Activated naive CD8-positive, alpha-beta T cell treated with anti-CD3 and anti-CD28 coated beads, Interleukin-2, amount 10 ng/mL, durations not matched to agents 7 days and 5 days (primary cell): ENCODE measurements at regions of chr20 and their contacts with region 1.

Region 1: GRCh38 chr20:36645998-36646397 is at the start of gene SLA2:
- DNase-seq: peak; percentile 72
- ATAC-seq: peak; percentile 77
- H3K4me3 Mint-ChIP-seq: peak within 1 kb of the TSS; percentile 98
- H3K27ac Mint-ChIP-seq: peak within 1 kb of the TSS; percentile 98
- H3K4me1 Mint-ChIP-seq: peaks cover 42% of the 10 kb centered on the region
- H3K27me3 Mint-ChIP-seq: no peaks in the 10 kb centered on the region
- total RNA-seq, gene SLA2: 103 TPM

Region 2: GRCh38 chr20:35421322-35421721 is 1224.7 kb before region 1 on chr20:
- POLR2A ChIA-PET with region 1: no interaction called
- DNase-seq: no peak
- ATAC-seq: no peak
- H3K4me3 Mint-ChIP-seq: no peak overlapping the region
- H3K27ac Mint-ChIP-seq: no peak overlapping the region
- H3K4me1 Mint-ChIP-seq: peaks cover 2% of the 10 kb centered on the region
- H3K27me3 Mint-ChIP-seq: peaks cover 20% of the 10 kb centered on the region

Region 3: GRCh38 chr20:36605399-36606157 is 40.4 kb before region 1 on chr20 and contains the start of gene RAB5IF:
- POLR2A ChIA-PET with region 1: interaction called, 25 read pairs
- DNase-seq: peak; percentile 99
- ATAC-seq: peak; percentile 93
- H3K4me3 Mint-ChIP-seq: peak within 1 kb of the TSS; percentile 98
- H3K27ac Mint-ChIP-seq: peak within 1 kb of the TSS; percentile 98
- H3K4me1 Mint-ChIP-seq: peaks cover 24% of the 10 kb centered on the region
- H3K27me3 Mint-ChIP-seq: no peaks in the 10 kb centered on the region
- total RNA-seq, gene RAB5IF: 73.1 to 76.1 TPM

Region 4: GRCh38 chr20:36624068-36624943 is 21.7 kb before region 1 on chr20:
- POLR2A ChIA-PET with region 1: interaction called, 90 read pairs
- DNase-seq: no peak
- ATAC-seq: peak; percentile 22
- H3K4me3 Mint-ChIP-seq: no peak overlapping the region
- H3K27ac Mint-ChIP-seq: peak overlapping the region; percentile 81
- H3K4me1 Mint-ChIP-seq: peaks cover 38% of the 10 kb centered on the region
- H3K27me3 Mint-ChIP-seq: no peaks in the 10 kb centered on the region

Region 5: GRCh38 chr20:36629719-36630681 is 16.0 kb before region 1 on chr20:
- POLR2A ChIA-PET with region 1: interaction called, 90 read pairs
- DNase-seq: peak; percentile 71
- ATAC-seq: peak; percentile 95
- H3K4me3 Mint-ChIP-seq: peak overlapping the region; percentile 78
- H3K27ac Mint-ChIP-seq: peak overlapping the region; percentile 93
- H3K4me1 Mint-ChIP-seq: peaks cover 49% of the 10 kb centered on the region
- H3K27me3 Mint-ChIP-seq: no peaks in the 10 kb centered on the region

Region 6: GRCh38 chr20:36658300-36658699 is 12.3 kb after region 1 on chr20:
- POLR2A ChIA-PET with region 1: interaction called, 109 read pairs
- DNase-seq: no peak
- ATAC-seq: peak; percentile 83
- H3K4me3 Mint-ChIP-seq: peak overlapping the region; percentile 78
- H3K27ac Mint-ChIP-seq: peak overlapping the region; percentile 91
- H3K4me1 Mint-ChIP-seq: peaks cover 28% of the 10 kb centered on the region
- H3K27me3 Mint-ChIP-seq: no peaks in the 10 kb centered on the region

Region 7: DNA sequence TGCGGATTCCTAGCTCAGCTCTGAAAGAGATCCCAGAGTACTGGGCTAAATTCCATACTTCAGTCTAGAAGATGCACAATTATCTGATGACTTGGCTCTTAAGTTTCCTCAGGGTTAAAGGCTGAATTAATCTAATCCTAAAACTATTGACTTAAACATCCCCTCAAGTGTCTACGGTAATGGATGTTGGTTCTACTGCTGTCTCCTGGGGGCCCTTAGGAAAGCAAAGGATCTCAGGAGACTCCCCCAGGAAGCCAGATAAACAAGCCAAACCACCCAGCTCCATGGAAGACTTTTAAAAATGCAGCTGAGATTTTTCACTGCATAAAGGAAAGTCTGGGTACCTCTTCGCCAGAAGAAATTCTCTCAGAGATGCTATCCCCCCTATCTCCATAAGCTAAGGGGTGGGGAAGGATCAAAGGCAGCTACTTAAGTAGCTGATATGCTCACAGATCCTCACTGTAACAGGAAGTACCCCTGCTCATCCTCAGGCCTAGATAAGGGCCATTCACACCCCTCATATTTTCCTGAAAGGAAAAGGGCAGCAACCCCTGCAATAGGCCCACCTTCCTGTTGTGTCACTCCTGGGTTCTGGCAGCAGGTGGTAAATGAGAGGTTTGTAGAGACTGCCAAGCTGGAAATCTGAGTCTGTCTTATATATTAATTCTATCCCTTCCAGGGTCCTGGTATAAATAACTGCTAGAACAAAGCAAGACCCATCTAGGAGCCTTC is 90.6 kb after region 1 on chr20:
- POLR2A ChIA-PET with region 1: interaction called, 39 read pairs
- DNase-seq: no peak
- ATAC-seq: no peak
- H3K4me3 Mint-ChIP-seq: no peak overlapping the region
- H3K27ac Mint-ChIP-seq: peak overlapping the region; percentile 43
- H3K4me1 Mint-ChIP-seq: peaks cover 31% of the 10 kb centered on the region
- H3K27me3 Mint-ChIP-seq: no peaks in the 10 kb centered on the region

Region 8: GRCh38 chr20:36773597-36774390 is 127.8 kb after region 1 on chr20 and contains the start of gene DSN1:
- POLR2A ChIA-PET with region 1: interaction called, 10 read pairs
- DNase-seq: peak; percentile 100
- ATAC-seq: peak; percentile 93
- H3K4me3 Mint-ChIP-seq: peak within 1 kb of the TSS; percentile 92
- H3K27ac Mint-ChIP-seq: peak within 1 kb of the TSS; percentile 96
- H3K4me1 Mint-ChIP-seq: peaks cover 27% of the 10 kb centered on the region
- H3K27me3 Mint-ChIP-seq: no peaks in the 10 kb centered on the region
- total RNA-seq, gene DSN1: 32.2 to 32.4 TPM